ENCODE measurements at regions of chr12 and their contacts with region 1.

Region 1: GRCh38 chr12:1583421-1584078 is 10.8 kb downstream of the FBXL14 start:
- DNase-seq: peak; percentile 77
- ATAC-seq: peak; percentile 81
- H3K4me3 ChIP-seq: no peak overlapping the region
- H3K27ac ChIP-seq: no peak overlapping the region
- H3K4me1 ChIP-seq: no peaks in the 10 kb centered on the region
- H3K27me3 ChIP-seq: no peaks in the 10 kb centered on the region
- CTCF ChIP-seq: peak; percentile 81 to 97 (median 86); a peak in 5 of 6 replicates
- EP300 ChIP-seq: peak in 1 of 2 experiments; percentile 48; a peak in 1 of 4 replicates
- POLR2A ChIP-seq: no peak
- RAD21 ChIP-seq: peak; percentile 98

Region 2: DNA sequence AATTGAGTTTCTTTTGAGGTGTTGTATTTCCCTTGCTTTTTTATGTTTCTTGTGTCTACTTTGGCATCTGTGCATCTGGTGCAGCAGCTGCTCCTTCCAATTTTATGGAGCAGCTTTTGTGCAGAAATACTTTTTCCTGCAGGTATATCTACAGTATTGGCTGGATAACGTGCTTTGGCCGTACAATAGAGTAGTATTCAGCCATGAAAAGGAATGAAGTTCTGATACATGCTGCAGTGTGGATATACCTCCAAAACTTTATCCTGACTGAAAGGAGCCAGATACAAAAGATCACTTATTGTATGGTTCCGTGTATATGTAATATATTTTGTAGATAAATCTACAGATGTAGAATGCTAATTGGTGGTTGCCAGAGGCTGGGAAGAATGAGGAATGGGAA is 517.9 kb before region 1 on chr12:
- CTCF ChIA-PET with region 1: interaction called, 6 read pairs
- POLR2A ChIA-PET with region 1: no interaction called
- RAD21 ChIA-PET with region 1: interaction called, 3 read pairs
- SMC1A ChIA-PET with region 1: interaction called, 5 read pairs
- in situ Hi-C with region 1: no loop called
- intact Hi-C with region 1: loop called (anchors 2 kb)
- DNase-seq: no peak
- ATAC-seq: no peak
- H3K4me3 ChIP-seq: no peak overlapping the region
- H3K27ac ChIP-seq: no peak overlapping the region
- H3K4me1 ChIP-seq: no peaks in the 10 kb centered on the region; the same call in 1 of the 2 replicates
- H3K27me3 ChIP-seq: 0 out of 4 replicates have a peak, but pooled peaks cover 0 to 1% of the 10 kb centered on the region in 2 experiments
- CTCF ChIP-seq: no peak
- EP300 ChIP-seq: no peak
- POLR2A ChIP-seq: no peak
- RAD21 ChIP-seq: no peak

Region 3: GRCh38 chr12:1108276-1108675 is 475.3 kb before region 1 on chr12:
- CTCF ChIA-PET with region 1: interaction called, 14 read pairs
- POLR2A ChIA-PET with region 1: interaction called, 3 read pairs
- RAD21 ChIA-PET with region 1: interaction called, 6 read pairs
- SMC1A ChIA-PET with region 1: interaction called, 16 read pairs
- in situ Hi-C with region 1: no loop called
- intact Hi-C with region 1: no loop called
- DNase-seq: peak; percentile 59
- ATAC-seq: peak; percentile 99
- H3K4me3 ChIP-seq: no peak overlapping the region
- H3K27ac ChIP-seq: no peak overlapping the region
- H3K4me1 ChIP-seq: peaks cover 5% of the 10 kb centered on the region; the same call in 1 of the 2 replicates
- H3K27me3 ChIP-seq: no peaks in the 10 kb centered on the region
- CTCF ChIP-seq: no peak
- EP300 ChIP-seq: 0 out of 4 replicates have a peak, but pooled peaks of 1 of the 2 experiments have one; percentile 35
- POLR2A ChIP-seq: no peak
- RAD21 ChIP-seq: no peak

Region 4: DNA sequence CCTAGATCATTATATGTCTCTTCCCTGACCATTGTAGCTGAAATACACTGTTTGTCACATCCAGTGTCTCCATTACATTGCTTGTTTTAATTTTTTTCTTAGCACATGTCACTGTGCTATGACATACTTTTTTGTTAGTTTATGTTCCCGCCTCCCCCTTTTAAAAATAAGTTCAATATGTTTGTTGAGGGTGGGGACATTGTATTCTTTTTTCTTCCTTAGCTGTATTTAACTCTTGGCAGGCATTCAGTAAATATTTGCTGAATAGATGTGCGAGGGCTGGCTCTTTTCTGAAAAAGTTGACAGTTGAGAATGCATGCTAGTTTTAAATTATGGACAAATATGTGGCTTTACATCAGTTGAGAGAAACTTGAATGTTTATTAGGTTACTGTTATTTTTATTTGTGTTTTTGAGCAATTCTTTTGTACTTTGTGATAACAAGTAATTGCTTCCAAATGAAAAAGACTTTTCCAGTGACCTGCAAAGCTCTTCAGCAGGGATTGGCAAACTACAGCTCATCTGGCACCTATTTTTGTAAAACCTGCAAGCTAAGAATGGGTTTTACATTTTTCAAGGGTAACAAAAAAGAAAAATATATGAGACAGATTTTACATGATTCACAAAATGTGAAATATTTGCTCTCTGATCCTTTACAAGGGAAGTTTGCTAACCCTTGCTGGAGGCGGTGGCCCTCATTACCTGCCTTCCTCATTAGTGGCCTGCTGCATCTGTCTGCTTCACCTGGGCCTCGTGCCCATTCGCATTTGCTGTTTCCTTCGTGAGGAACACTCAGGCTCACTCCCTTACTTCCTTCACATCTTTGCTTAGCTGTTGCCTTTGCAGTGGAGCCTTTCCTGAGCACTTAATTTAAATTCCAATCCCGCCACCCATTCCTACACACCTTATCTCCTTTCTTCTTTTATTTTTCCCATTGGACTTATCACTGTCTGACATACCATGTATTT is 363.1 kb before region 1 on chr12:
- CTCF ChIA-PET with region 1: no interaction called
- POLR2A ChIA-PET with region 1: no interaction called
- RAD21 ChIA-PET with region 1: no interaction called
- SMC1A ChIA-PET with region 1: no interaction called
- in situ Hi-C with region 1: no loop called
- intact Hi-C with region 1: no loop called
- DNase-seq: no peak
- ATAC-seq: no peak
- H3K4me3 ChIP-seq: no peak overlapping the region
- H3K27ac ChIP-seq: no peak overlapping the region
- H3K4me1 ChIP-seq: no peaks in the 10 kb centered on the region
- H3K27me3 ChIP-seq: no peaks in the 10 kb centered on the region
- CTCF ChIP-seq: no peak
- EP300 ChIP-seq: no peak
- POLR2A ChIP-seq: no peak
- RAD21 ChIP-seq: no peak

Region 5: DNA sequence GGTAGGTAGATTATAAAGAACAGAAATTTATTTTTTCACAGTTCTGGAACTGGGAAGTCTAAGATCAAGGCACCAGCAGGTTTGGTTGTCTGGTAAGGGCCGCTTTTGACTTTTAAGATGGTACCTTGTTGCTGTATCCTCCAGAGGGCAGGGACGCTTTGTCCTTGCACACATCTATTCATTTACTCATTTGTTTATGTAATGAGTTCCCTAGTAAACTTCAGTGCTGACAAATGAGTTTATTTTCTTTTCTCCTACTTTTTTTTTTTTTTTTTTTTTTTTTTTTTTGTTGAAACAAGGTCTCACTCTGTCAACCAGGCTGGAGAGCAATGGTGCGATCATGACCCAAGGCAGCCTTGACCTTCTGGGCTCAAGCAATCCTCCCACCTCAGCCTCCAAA is 184.9 kb before region 1 on chr12:
- CTCF ChIA-PET with region 1: interaction called, 3 read pairs
- POLR2A ChIA-PET with region 1: no interaction called
- RAD21 ChIA-PET with region 1: no interaction called
- SMC1A ChIA-PET with region 1: interaction called, 3 read pairs
- in situ Hi-C with region 1: no loop called
- intact Hi-C with region 1: loop called (anchors 1 kb)
- DNase-seq: no peak
- ATAC-seq: no peak
- H3K4me3 ChIP-seq: no peak overlapping the region
- H3K27ac ChIP-seq: no peak overlapping the region
- H3K4me1 ChIP-seq: no peaks in the 10 kb centered on the region
- H3K27me3 ChIP-seq: no peaks in the 10 kb centered on the region
- CTCF ChIP-seq: no peak; a peak in 1 of 6 replicates
- EP300 ChIP-seq: no peak
- POLR2A ChIP-seq: no peak
- RAD21 ChIP-seq: peak; percentile 40

Region 6: GRCh38 chr12:1533602-1534304 is 49.8 kb before region 1 on chr12:
- CTCF ChIA-PET with region 1: interaction called, 55 read pairs
- POLR2A ChIA-PET with region 1: interaction called, 5 read pairs
- RAD21 ChIA-PET with region 1: interaction called, 55 read pairs
- SMC1A ChIA-PET with region 1: interaction called, 56 read pairs
- in situ Hi-C with region 1: no loop called
- intact Hi-C with region 1: loop called (anchors 2 kb)
- DNase-seq: peak; percentile 77
- ATAC-seq: peak; percentile 80
- H3K4me3 ChIP-seq: peak overlapping the region; percentile 66
- H3K27ac ChIP-seq: peak overlapping the region; percentile 81
- H3K4me1 ChIP-seq: peaks cover 37% of the 10 kb centered on the region
- H3K27me3 ChIP-seq: peaks cover 0 to 5% of the 10 kb centered on the region in 2 experiments; a peak in 1 of 4 replicates
- CTCF ChIP-seq: no peak
- EP300 ChIP-seq: peak; percentile 54 to 58; a peak in 3 of 4 replicates
- POLR2A ChIP-seq: no peak
- RAD21 ChIP-seq: no peak

Region 7: DNA sequence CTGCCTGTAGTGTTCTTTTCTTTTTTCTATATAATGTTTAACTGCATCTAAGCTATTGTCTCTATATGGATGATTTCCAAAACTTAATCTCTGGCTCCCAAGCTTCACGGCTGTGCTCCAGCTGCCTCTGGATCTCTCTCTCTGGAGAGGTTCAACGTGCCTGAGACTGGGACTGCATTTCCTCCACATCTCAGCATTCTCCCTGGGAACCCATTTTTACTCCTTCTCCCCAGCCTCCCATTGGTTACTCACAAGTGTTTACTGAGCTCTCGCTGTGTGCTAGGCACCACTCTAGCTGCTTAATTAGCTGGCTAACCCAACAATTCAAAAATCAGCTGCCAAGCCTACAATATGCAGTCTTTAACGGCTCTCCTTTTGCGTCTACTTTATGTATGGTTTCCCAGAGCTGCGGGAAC is 23.9 kb before region 1 on chr12:
- CTCF ChIA-PET with region 1: interaction called, 6 read pairs
- POLR2A ChIA-PET with region 1: interaction called, 3 read pairs
- RAD21 ChIA-PET with region 1: interaction called, 20 read pairs
- SMC1A ChIA-PET with region 1: interaction called, 9 read pairs
- in situ Hi-C with region 1: no loop called
- intact Hi-C with region 1: no loop called
- DNase-seq: no peak
- ATAC-seq: no peak
- H3K4me3 ChIP-seq: no peak overlapping the region
- H3K27ac ChIP-seq: no peak overlapping the region
- H3K4me1 ChIP-seq: peaks cover 6% of the 10 kb centered on the region
- H3K27me3 ChIP-seq: no peaks in the 10 kb centered on the region
- CTCF ChIP-seq: no peak
- EP300 ChIP-seq: no peak
- POLR2A ChIP-seq: no peak
- RAD21 ChIP-seq: no peak

Region 8: GRCh38 chr12:1605129-1606020 is 21.8 kb after region 1 on chr12:
- CTCF ChIA-PET with region 1: interaction called, 48 read pairs
- POLR2A ChIA-PET with region 1: interaction called, 5 read pairs
- RAD21 ChIA-PET with region 1: interaction called, 31 read pairs
- SMC1A ChIA-PET with region 1: interaction called, 46 read pairs
- in situ Hi-C with region 1: no loop called
- intact Hi-C with region 1: no loop called
- DNase-seq: no peak
- ATAC-seq: peak; percentile 73
- H3K4me3 ChIP-seq: peak overlapping the region; percentile 61; the same call in 1 of the 2 replicates
- H3K27ac ChIP-seq: peak overlapping the region; percentile 79
- H3K4me1 ChIP-seq: peaks cover 48% of the 10 kb centered on the region
- H3K27me3 ChIP-seq: no peaks in the 10 kb centered on the region
- CTCF ChIP-seq: peak; percentile 75 to 93 (median 79)
- EP300 ChIP-seq: no peak
- POLR2A ChIP-seq: no peak; the same call in 1 of the 2 replicates
- RAD21 ChIP-seq: peak; percentile 75